Panc1 (cell line): ENCODE measurements at regions of chr7 and their contacts with region 1.

Region 1: DNA sequence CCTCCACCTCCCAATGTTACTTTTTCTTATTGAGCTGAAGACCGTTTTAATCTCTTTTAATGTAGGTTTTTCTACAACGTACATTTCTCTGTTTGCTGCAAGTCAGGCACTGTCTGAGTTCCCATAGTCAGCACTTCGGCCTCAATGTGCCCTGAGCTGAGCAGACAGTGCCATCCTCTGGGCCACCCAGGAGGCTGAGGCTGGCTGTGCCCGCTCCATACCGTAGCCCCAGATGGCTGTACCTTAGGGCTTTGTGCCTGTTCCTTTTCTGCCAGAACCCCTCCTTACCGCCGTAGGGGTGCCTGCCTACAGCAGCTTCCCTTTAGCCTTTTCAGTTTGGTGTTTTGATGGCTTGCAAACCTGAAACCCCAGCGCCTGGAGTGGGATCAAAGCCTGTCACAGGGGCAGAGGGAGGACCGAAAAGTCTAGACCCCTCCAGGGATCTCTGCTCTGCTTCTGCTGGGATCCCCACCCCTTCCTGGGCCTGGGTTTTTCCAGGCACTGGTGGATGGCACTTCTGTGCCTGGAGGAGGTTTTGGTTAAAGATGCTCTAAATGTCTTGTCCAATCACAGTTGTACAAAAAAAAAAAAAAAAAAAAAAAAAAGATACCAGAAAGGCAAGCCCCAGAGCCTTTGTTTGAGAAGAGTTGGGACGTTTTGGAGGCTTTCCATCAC is 9.0 kb downstream of the AGAP3 start:
- DNase-seq: no peak
- ATAC-seq: peak; percentile 58; the same call in 1 of the 2 replicates
- H3K4me3 ChIP-seq: no peak overlapping the region
- H3K27ac ChIP-seq: no peak overlapping the region
- H3K4me1 ChIP-seq: 0 out of 2 replicates have a peak, but pooled peaks cover 4% of the 10 kb centered on the region
- H3K27me3 ChIP-seq: no peaks in the 10 kb centered on the region
- CTCF ChIP-seq: no peak

Region 2: GRCh38 chr7:151028131-151028947 is 66.9 kb before region 1 on chr7 and contains the start of gene ABCB8:
- CTCF ChIA-PET with region 1: no interaction called
- POLR2A ChIA-PET with region 1: interaction called, 15 read pairs
- in situ Hi-C with region 1: no loop called
- intact Hi-C with region 1: no loop called
- DNase-seq: peak; percentile 100
- ATAC-seq: peak; percentile 96
- H3K4me3 ChIP-seq: peak within 1 kb of the TSS; percentile 73 to 79
- H3K27ac ChIP-seq: peak within 1 kb of the TSS; percentile 90
- H3K4me1 ChIP-seq: no peaks in the 10 kb centered on the region; the same call in none of the 2 replicates
- H3K27me3 ChIP-seq: no peaks in the 10 kb centered on the region
- CTCF ChIP-seq: peak; percentile 78; the same call in 1 of the 2 replicates
- total RNA-seq, gene ABCB8: 49.8 TPM

Region 3: GRCh38 chr7:151276666-151277590 is 181.7 kb after region 1 on chr7:
- CTCF ChIA-PET with region 1: no interaction called
- POLR2A ChIA-PET with region 1: no interaction called
- in situ Hi-C with region 1: no loop called
- intact Hi-C with region 1: no loop called
- DNase-seq: no peak
- ATAC-seq: peak; percentile 91
- H3K4me3 ChIP-seq: peak overlapping the region; percentile 38 to 40
- H3K27ac ChIP-seq: no peak overlapping the region
- H3K4me1 ChIP-seq: peaks cover 5% of the 10 kb centered on the region; the same call in 1 of the 2 replicates
- H3K27me3 ChIP-seq: no peaks in the 10 kb centered on the region
- CTCF ChIP-seq: no peak